ENCODE measurements at regions of chr11 and their contacts with region 1.

Region 1: DNA sequence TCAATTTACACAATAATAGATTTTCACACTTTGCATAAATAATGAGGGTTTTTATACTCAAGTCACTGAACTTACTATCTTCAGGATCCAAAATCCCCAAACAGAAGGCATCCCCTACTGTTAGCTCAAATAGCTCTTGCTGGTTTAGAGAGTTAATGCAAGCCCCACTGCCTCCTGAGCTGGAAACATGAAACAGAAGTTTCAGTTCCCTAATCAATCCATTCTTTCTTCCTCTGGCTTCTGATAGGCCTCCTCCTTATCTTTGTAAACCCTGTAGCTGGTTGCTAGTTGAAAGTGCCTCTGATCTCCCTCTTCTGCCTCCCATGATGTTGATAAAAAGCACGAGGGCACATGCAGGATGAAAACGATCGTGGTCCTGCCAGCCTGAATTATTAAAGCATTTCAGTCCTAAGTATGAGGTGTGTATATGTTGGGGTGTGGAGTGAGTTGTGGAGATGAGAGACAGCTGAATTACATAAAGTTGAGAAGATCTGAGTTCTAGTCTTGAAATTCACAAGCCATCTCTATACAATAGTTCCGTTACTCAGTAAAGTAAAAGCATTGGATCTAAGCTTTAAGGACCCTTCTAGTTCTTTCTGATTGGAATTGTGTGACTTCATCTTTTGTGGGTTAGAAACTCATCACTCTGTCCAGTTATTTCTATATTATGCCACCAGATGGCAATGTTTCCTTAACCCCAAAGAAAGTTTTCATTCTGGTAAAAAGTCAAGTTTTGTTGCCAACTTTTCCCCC is 35.0 kb upstream of the EHF start:
- DNase-seq: no peak
- H3K4me3 ChIP-seq: no peak overlapping the region
- H3K27ac ChIP-seq: no peak overlapping the region
- H3K4me1 ChIP-seq: peaks cover 0 to 4% (median 1%) of the 10 kb centered on the region in 4 donors
- H3K27me3 ChIP-seq: peaks cover 0 to 4% (median 0%) of the 10 kb centered on the region in 4 donors
- CTCF ChIP-seq: peak; percentile 58 to 68 (median 63)
- EP300 ChIP-seq: no peak
- POLR2A ChIP-seq: no peak

Region 2: GRCh38 chr11:34899633-34900016 is 313.7 kb after region 1 on chr11:
- intact Hi-C with region 1: loop called (anchors 2 kb)
- DNase-seq: no peak
- H3K4me3 ChIP-seq: no peak overlapping the region
- H3K27ac ChIP-seq: no peak overlapping the region
- H3K4me1 ChIP-seq: peaks cover 0 to 13% (median 0%) of the 10 kb centered on the region in 4 donors
- H3K27me3 ChIP-seq: no peaks in the 10 kb centered on the region
- CTCF ChIP-seq: no peak
- EP300 ChIP-seq: no peak
- POLR2A ChIP-seq: no peak

Region 3: DNA sequence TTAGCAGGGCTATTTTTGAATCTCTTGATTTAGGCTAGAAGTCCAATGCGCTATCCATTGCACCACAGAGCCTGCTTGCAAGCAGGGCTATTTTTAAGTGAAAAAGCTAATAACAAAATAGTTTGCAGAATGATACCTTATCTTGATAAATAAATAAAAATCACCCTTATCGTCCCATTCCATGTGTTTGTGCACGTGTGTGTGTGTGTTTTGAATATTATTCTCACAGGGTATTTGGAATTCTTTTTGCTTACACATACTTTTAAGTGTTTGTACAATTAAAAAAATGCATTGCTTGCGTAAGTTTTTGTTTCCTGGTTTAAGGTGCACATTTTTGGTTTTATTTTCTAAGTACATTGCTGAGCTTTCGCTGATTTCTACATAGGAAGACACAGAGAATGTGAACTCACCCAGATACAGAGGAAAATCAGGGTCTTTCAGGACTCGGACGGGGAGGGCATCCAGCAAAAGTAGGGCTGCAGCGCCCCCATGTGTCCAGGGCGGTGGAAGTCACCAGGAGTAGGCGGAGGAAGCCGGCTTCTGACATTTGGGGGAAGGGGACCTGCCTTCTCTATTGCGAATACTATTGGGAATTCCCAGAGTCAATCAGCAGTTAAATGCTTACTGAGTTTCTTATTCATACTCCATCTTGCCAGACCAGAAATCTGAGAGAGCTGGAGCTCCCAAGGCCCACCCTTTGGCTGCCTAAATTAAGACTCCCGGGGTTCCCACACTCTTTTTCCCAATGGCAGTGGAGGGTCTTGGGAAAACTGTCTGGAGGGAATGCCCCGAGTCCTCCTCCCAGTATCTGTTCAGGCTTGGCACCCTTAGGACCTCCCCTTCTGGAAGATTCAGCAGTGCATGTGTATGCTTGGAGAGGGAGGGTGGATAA is 806.3 kb after region 1 on chr11:
- intact Hi-C with region 1: loop called (anchors 5 kb)
- DNase-seq: peak; percentile 94
- H3K4me3 ChIP-seq: peak overlapping the region in 3 of 4 donors; percentile 17 to 36 (median 18)
- H3K27ac ChIP-seq: no peak overlapping the region
- H3K4me1 ChIP-seq: peaks cover 8 to 21% (median 17%) of the 10 kb centered on the region in 4 donors
- H3K27me3 ChIP-seq: no peaks in the 10 kb centered on the region
- CTCF ChIP-seq: peak; percentile 83 to 87 (median 85)
- EP300 ChIP-seq: no peak
- POLR2A ChIP-seq: no peak

Region 4: DNA sequence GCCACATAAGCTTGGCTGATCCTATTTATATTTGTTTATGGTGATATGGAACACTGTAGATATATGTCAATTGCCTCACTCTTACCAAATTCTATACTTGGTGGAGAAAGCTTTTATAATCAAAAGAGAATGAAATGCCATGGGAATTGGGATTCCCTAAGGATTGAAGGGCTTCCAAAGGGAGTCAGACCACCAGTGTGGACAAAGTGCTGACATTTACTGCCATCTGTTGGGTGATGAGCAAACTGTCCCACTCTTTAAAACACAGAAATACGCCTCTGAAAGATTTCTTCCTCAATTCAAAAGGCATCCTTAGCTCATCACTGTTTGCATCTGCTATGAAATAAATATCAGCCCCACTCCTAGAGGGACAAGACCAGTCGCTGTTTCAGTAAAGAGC is 826.4 kb after region 1 on chr11:
- intact Hi-C with region 1: loop called (anchors 5 kb)
- DNase-seq: no peak
- H3K4me3 ChIP-seq: no peak overlapping the region
- H3K27ac ChIP-seq: no peak overlapping the region
- H3K4me1 ChIP-seq: no peaks in the 10 kb centered on the region
- H3K27me3 ChIP-seq: peaks cover 0 to 20% (median 2%) of the 10 kb centered on the region in 4 donors
- CTCF ChIP-seq: peak in 2 of 3 experiments; percentile 31 to 43
- EP300 ChIP-seq: no peak
- POLR2A ChIP-seq: no peak

Region 5: DNA sequence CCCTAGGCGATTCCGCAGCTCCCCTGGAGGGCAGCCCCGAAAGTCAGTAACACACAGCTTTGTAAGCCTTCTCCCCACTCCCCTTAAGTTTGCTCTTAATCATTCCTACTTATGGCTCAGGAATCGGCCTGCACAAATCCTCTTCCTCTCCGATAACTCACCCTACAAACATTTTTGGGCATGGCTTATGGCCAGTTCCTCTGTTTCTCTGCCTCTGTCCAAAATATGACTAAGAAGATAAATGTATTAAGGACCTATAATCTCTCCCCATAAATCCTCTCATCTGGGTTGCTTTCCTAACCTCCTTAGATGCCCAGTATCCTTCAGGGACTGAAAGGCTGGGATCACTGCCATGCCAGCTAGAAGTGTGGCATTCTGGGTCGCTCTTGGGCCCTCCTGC is 898.5 kb after region 1 on chr11:
- intact Hi-C with region 1: loop called (anchors 5 kb)
- DNase-seq: no peak
- H3K4me3 ChIP-seq: no peak overlapping the region
- H3K27ac ChIP-seq: no peak overlapping the region
- H3K4me1 ChIP-seq: peaks cover 5 to 17% (median 7%) of the 10 kb centered on the region in 4 donors
- H3K27me3 ChIP-seq: no peaks in the 10 kb centered on the region
- CTCF ChIP-seq: no peak
- EP300 ChIP-seq: no peak
- POLR2A ChIP-seq: no peak